GM10248 (cell line): ENCODE measurements at regions of chr14 and their contacts with region 1.

Region 1: DNA sequence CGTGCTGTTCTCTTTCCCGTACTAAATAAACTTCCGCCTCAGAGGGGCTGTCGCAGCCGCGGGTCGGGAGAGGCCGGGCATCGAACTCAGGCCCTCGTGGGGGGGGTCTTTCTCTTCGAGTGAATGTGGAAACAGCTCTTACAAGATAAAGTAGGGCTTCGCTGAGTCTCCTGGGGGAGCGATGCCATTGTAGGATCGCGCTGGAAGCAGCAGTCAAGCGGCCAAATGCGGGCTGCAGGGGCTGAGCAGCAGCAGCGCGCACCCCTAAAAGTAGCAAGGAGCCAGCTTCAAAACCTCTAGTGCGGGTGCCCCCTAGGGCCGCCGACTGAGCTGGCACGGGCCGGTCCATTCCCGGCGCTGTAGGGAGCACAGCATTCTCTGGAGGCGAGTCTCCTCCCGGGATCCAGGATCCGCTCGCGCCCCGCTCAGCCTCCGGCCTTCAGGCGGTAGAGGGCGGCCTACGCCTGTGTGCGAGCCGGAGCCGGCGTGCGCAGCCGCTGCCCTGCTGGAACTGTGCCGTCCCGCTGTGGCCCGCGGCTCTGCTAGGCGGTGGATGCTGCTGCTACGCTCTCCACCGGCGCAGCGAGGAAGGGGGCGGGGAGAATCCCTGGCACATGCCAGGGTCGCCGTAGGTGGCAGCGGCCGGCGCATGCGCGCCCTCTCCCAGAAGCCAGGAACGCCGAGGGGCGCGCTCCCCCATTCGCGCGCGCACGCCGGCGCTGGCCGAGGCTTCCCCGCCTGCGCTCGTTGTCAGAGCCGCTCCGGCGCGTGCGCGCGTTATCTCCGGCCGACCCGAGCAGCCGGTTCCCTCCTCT is at the start of gene FUT8:
- DNase-seq: peak; percentile 85
- CTCF ChIP-seq: peak; percentile 55

Region 2: GRCh38 chr14:65287264-65288131 is 124.7 kb before region 1 on chr14:
- CTCF ChIA-PET with region 1: interaction called, 25 read pairs
- POLR2A ChIA-PET with region 1: interaction called, 5 read pairs
- DNase-seq: peak; percentile 81
- CTCF ChIP-seq: no peak

Region 3: DNA sequence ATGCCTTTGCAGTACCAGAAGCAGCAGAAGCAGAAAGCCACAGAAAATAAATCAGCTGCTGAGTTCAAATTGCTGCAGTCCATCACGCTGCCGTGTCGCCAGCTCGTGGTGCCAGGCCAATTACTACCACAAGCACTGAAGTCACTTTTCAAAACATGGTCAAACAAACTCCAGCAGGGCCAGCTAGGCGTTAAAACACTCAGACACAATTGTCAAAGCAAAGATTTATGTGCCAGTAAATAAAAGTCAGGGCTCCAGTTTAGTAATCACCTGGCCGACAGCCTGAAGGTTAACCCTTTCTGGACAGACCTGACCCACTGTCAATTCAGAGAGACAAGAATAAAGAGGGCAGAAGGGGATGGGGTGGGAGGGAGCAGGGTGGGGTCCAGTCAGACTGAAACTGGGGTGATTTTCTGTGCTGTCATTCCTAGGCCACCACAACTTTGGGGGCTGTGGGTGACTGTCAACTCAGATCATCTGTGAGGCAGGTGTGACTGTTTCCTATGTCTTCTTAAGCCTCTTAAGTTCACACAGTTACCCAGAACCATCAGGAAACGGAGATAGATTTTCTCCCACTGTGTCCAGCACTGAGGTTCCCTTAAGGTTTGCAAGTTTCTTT is 109.6 kb before region 1 on chr14:
- CTCF ChIA-PET with region 1: interaction called, 36 read pairs
- POLR2A ChIA-PET with region 1: interaction called, 6 read pairs
- DNase-seq: peak; percentile 67
- CTCF ChIP-seq: no peak

Region 4: DNA sequence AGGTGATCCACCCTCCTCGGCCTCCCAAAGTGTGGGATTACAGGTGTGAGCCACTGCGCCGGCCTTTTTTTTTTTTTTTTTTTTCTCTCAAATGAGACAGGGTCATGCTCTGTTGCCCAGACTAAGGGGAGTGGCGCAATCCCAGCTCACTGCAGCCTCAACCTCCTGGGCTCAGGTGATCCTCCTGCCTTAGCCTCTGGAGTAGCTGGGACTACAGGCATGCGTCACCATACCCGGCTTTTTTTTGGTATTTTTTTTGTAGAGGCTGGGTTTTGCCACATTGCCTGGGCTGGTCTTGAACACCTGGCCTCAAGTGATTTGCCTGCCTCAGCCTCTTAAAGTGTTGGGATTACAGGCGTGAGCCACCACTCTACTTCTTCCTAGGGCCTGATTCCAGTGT is 19.0 kb after region 1 on chr14:
- CTCF ChIA-PET with region 1: interaction called, 19 read pairs
- POLR2A ChIA-PET with region 1: no interaction called
- DNase-seq: no peak
- CTCF ChIP-seq: no peak

Region 5: GRCh38 chr14:65449647-65450046 is 37.4 kb after region 1 on chr14:
- CTCF ChIA-PET with region 1: no interaction called
- POLR2A ChIA-PET with region 1: no interaction called
- DNase-seq: no peak
- CTCF ChIP-seq: no peak

Region 6: DNA sequence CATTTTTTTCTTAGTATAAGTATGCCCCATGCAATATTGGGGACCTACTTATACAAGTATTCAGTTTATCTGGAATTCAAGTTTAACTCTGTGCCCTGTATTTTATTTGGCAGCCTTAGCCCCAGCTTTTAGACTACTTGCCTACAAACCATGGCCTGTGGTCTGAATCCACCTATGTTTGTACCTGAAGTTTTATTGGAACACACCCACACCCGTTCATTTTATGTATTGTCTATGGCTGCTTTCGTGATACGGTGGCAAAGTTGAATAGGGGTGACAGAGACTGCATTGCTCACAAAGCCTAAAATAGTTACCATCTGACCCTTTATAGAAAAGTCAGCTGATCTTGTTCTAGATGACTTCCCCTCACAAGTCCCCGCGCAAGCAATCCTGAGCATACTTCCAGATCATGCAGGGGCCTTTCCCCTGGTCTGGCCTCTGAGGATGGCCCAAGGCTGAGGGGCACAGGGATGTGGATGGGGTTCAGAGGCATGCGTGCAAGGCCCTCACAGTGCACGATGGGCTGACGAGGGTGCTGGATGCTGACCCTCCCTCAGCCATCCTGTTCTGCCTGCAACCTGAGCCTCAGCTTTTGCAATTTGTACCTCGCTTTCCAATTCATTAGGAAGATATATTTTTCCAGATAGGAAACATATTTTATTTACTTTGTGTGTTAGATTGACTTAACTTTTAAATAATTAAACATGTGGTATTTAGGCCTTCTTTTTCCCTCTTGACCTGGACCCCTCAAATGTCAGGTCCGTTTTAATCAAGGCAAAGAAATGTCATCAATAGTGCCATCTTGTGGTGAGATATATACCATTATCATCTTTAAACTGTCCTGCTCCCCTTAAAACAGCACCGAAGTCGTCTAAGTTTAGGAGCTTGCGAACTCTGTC is 546.7 kb after region 1 on chr14:
- CTCF ChIA-PET with region 1: interaction called, 20 read pairs
- POLR2A ChIA-PET with region 1: no interaction called
- DNase-seq: peak; percentile 48
- CTCF ChIP-seq: peak; percentile 55